Right ventricle myocardium inferior (tissue), 1 donor: ENCODE measurements at regions of chr1 and their contacts with region 1.

Region 1: DNA sequence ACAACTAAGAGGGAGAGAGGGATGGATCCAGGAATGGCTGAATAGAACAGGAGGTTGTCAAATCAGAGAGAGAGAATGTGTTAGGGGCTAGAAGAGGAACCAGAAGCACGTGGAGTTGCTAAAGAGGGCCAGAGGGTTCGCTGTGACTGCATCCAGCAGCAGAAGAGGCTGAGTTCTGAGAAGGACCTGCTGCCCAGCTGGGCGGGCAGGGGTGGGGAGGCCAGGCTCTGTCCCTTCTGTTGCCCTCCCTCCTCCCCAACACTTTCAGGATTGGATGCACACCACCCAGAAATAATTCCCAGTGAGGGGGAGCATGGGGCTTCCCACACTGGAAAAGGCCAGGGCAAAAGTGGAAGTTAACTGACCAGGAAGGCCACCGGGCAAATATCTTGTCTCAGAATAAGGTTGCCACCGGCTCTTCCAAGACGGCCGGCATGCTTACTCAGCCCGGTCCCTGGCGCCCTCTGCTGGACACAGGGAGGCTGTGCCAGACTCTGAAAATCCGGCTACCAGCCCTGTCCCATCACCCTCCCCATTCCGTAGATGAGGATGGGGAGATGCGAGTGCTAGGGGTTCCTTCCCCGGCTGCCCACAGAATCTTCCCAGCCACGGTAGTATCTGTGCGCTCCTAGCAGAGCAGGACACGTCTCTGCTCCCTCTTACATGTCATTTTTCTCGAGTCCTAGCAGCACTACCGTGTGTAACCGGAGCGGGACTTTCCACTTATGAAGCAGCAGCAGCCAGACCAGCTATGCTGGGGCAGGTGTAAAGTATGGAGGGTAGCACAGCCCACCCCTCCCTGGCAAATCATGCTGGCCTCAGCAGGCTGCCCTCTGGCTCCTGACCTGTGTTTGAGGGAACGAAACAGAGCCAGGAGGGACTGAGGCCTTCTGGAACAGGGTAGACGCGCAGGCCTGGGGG is 46.8 kb upstream of the A3GALT2 start:
- DNase-seq: peak; percentile 94
- ATAC-seq: peak; percentile 73

Region 2: GRCh38 chr1:33094971-33095604 is 272.7 kb before region 1 on chr1:
- intact Hi-C with region 1: loop called (anchors 10 kb)
- DNase-seq: no peak
- ATAC-seq: peak; percentile 21

Region 3: GRCh38 chr1:33219881-33220661 is 147.7 kb before region 1 on chr1:
- intact Hi-C with region 1: loop called (anchors 2 kb)
- DNase-seq: no peak
- ATAC-seq: no peak

Region 4: GRCh38 chr1:33332357-33332789 is 35.4 kb before region 1 on chr1:
- intact Hi-C with region 1: loop called (anchors 2 kb)
- DNase-seq: no peak
- ATAC-seq: no peak

Region 5: GRCh38 chr1:33410091-33410701 is 42.5 kb after region 1 on chr1:
- intact Hi-C with region 1: no loop called
- DNase-seq: no peak
- ATAC-seq: peak; percentile 69

Region 6: GRCh38 chr1:33460947-33461629 is 93.3 kb after region 1 on chr1:
- intact Hi-C with region 1: loop called (anchors 2 kb)
- DNase-seq: peak; percentile 81
- ATAC-seq: peak; percentile 75

Region 7: DNA sequence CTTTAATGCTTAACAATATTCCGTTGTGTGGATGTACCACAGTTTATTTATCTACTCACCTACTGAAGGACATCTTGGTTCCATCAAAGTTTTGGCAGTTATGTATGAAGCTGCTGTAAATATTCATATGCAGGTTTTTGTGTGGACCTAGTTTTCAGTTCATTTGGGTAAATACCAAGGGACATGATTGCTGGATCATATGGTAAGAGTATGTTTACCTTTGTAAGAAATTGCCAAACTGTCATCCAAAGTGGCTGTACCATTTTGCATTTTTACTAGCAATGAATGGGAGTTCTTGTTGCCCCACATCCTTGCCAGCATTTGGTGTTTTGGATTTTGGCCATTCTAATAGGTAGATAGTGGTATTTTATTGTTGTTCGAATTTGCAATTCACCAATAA is 114.7 kb after region 1 on chr1:
- intact Hi-C with region 1: no loop called
- DNase-seq: no peak
- ATAC-seq: no peak